AG04449 (cell line): ENCODE measurements at regions of chr10 and their contacts with region 1.

Region 1: DNA sequence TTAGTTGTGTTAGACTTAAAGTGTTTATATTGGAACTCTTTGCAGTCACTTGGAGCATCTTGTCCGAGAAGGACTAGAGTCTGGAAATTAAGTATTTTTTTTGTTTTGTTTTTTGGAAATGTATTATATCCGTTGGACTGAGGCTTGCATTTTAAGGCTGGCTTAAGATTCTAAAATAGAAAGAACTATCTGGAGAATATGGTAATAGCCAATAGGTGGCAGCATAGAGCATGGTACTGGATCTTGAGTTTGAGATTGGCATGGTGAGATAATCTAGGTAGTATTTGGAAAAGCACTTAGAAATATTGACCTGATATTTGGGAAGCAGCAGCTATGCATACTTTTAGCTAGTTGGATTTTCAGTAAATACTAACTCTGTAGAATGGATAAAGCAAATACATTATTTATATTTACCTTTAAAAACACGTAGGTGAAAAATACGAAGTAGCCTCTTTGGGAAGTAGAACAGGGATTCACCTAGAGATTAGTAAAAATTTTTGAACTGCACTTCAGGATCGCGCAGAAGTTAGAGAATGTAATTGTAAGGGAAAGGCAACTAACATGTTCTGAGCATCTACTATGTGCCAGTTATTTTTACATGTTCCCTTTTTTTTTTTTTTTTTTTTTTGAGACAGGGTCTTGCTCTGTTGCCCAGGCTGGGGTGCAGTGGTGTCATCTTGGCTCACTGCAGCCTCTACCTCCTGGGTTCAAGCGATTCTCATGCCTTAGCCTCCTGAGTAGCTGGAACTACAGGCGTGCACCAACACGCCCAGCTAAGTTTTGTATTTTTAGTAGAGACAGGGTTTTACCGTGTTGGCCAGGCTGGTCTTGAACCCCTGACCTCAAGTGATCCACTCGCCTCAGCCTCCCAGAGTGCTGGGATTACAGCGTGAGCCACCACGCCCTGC is 78.6 kb downstream of the LCOR start:
- DNase-seq: no peak
- H3K4me3 ChIP-seq: no peak overlapping the region
- CTCF ChIP-seq: peak; percentile 27

Region 2: GRCh38 chr10:96890172-96890513 is 20.6 kb before region 1 on chr10:
- CTCF ChIA-PET with region 1: interaction called, 11 read pairs
- POLR2A ChIA-PET with region 1: no interaction called
- DNase-seq: no peak
- H3K4me3 ChIP-seq: no peak overlapping the region
- CTCF ChIP-seq: no peak

Region 3: GRCh38 chr10:96921655-96922054 is 10.9 kb after region 1 on chr10:
- CTCF ChIA-PET with region 1: interaction called, 11 read pairs
- POLR2A ChIA-PET with region 1: no interaction called
- DNase-seq: no peak
- H3K4me3 ChIP-seq: no peak overlapping the region
- CTCF ChIP-seq: no peak

Region 4: DNA sequence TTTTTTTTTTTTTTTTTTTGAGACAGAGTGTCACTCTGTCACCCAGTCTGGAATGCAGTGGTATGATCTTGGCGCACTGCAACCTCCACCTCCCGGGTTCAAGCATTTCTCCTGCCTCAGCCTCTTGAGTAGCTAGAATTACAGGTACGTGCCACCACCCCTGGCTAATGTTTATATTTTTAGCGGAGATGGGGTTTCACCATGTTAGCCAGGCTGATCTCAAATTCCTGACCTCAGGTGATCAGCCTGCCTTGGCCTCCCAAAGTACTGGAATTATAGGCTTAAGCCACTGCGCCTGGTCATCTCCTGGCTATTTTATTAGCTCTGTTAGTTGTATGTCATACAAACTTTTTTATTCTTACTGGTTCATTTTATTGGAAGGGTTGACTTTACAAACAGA is 24.4 kb after region 1 on chr10:
- CTCF ChIA-PET with region 1: interaction called, 14 read pairs
- POLR2A ChIA-PET with region 1: no interaction called
- DNase-seq: no peak
- H3K4me3 ChIP-seq: no peak overlapping the region
- CTCF ChIP-seq: no peak